Gastrocnemius medialis (tissue), 4 donors: ENCODE measurements at regions of chr18 and their contacts with region 1.

Region 1: DNA sequence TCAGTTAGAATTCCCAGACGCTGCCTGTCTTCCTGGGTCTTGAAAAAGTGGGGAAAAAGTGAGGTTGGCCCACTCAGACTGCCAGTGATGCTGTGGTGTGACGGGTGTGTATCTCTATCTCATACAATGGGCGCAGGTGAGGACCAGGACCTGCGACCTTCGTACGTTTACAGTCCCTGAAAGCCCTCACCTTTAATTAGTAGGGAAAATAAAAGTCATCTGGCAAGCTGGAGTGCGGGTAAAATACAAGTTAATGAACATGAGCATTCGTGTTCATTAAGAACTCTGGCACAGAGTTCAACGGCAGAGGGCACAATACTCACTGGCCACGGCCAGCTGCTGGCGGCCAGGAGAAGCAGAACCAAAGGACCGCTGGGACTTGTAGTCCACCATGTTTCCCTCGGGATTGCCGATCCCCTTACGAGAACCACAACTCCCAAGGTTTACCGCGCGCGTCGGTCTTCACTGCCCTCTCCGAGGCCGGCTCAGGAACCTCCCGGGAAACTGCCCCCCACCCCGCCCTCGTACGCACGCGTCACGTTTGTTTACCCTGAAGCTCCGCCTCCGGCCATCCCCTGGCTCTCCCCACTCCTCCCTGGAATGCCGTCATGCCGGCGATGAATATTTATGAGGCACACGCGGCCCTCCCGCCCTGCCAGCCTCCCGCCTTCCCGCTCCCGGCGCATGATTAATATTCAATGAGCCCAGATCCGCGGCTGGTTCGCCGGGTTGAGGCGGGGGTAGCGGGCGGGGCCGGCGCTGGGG is 488 bp upstream of the PHLPP1 start:
- DNase-seq: peak; percentile 99
- ATAC-seq: peak; percentile 91 to 92
- H3K4me3 ChIP-seq: peak overlapping the region; percentile 68 to 78 (median 70)
- H3K27ac ChIP-seq: peak overlapping the region; percentile 92 to 95 (median 94)
- H3K4me1 ChIP-seq: peaks cover 19 to 32% of the 10 kb centered on the region in 2 donors
- H3K27me3 ChIP-seq: no peaks in the 10 kb centered on the region
- CTCF ChIP-seq: peak; percentile 58 to 82 (median 68)
- POLR2A ChIP-seq: no peak

Region 2: DNA sequence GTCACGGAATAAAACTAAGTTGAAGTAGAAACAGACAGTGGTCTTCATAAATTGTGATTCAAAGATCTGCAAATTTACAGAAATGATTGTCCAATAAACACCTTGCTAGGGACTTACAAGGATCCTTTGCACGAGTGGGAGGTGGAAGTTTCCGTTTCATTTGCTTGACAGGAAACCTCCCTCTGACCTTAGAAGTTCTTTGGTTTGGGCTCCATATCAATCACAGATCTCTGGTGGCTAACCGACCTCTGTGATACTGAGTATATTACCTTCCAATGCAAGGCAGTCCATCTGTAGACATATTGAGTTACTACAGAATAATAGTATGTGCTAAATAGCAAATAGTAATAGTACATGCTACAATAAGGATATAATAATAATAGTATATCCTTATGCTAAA is 788.3 kb before region 1 on chr18:
- in situ Hi-C with region 1: no loop called
- intact Hi-C with region 1: no loop called
- DNase-seq: no peak
- ATAC-seq: no peak
- H3K4me3 ChIP-seq: no peak overlapping the region
- H3K27ac ChIP-seq: no peak overlapping the region
- H3K4me1 ChIP-seq: no peaks in the 10 kb centered on the region
- H3K27me3 ChIP-seq: no peaks in the 10 kb centered on the region
- CTCF ChIP-seq: no peak
- POLR2A ChIP-seq: no peak

Region 3: GRCh38 chr18:62324917-62325805 is 389.7 kb before region 1 on chr18 and contains the start of gene TNFRSF11A:
- in situ Hi-C with region 1: no loop called
- intact Hi-C with region 1: loop called (anchors 5 kb)
- DNase-seq: no peak
- ATAC-seq: peak; percentile 38 to 64
- H3K4me3 ChIP-seq: peak within 1 kb of the TSS; percentile 52 to 58 (median 54)
- H3K27ac ChIP-seq: no peak within 1 kb of the TSS
- H3K4me1 ChIP-seq: peaks cover 15 to 24% of the 10 kb centered on the region in 2 donors
- H3K27me3 ChIP-seq: peaks cover 63 to 80% (median 69%) of the 10 kb centered on the region in 3 donors
- CTCF ChIP-seq: peak in 4 of 5 experiments; percentile 20 to 30 (median 24)
- POLR2A ChIP-seq: no peak
- total RNA-seq, gene TNFRSF11A: 1.4 to 3.2 (median 1.8) TPM in 3 of 4 donors, not detected in the other

Region 4: DNA sequence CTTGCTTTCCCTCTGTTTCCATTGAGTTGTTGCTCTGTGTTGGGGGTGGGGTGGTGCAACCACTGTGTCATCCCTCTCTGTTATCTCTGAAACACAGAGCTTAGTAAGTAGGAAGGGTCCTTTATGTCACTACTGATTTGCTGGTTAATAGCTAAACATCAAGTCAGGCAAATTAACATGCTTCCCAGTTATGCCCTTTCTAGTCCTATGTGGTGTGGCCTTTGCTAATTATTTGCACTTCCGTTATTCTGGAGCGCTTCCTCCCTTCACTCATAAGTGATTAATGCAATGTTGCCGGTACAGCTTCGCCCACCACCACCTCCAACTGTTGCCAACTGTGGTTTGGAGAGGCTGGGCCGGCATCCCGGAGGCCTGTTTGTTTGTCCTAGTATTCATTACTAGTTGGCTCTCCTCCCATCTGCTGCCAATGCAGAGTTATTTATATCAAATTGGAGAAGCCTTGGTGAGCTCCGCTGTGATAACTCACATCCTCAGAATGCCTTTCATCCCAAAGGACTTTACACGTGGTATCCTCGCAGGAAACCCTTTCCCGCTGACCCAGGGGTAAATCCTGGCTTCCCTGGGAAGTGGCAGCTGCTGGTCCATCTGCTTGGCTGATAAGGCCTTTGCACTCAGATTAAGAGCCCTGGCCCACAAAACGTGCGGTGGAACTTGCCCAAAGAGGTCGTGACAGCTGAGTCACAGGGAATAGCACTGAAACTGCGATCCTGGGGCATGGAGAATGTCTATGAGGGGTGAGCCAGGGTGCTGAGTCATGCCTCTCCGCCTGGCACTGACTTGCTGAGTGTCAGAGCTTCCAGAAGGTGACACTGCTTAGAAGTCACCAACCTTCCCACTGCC is 264.1 kb before region 1 on chr18:
- in situ Hi-C with region 1: no loop called
- intact Hi-C with region 1: loop called (anchors 2 kb)
- DNase-seq: peak; percentile 88 to 94
- ATAC-seq: peak; percentile 84 to 87
- H3K4me3 ChIP-seq: peak overlapping the region in 3 of 4 donors; percentile 4 to 34 (median 16)
- H3K27ac ChIP-seq: peak overlapping the region; percentile 81 to 94 (median 91)
- H3K4me1 ChIP-seq: peaks cover 22 to 23% of the 10 kb centered on the region in 2 donors
- H3K27me3 ChIP-seq: no peaks in the 10 kb centered on the region
- CTCF ChIP-seq: no peak
- POLR2A ChIP-seq: no peak

Region 5: DNA sequence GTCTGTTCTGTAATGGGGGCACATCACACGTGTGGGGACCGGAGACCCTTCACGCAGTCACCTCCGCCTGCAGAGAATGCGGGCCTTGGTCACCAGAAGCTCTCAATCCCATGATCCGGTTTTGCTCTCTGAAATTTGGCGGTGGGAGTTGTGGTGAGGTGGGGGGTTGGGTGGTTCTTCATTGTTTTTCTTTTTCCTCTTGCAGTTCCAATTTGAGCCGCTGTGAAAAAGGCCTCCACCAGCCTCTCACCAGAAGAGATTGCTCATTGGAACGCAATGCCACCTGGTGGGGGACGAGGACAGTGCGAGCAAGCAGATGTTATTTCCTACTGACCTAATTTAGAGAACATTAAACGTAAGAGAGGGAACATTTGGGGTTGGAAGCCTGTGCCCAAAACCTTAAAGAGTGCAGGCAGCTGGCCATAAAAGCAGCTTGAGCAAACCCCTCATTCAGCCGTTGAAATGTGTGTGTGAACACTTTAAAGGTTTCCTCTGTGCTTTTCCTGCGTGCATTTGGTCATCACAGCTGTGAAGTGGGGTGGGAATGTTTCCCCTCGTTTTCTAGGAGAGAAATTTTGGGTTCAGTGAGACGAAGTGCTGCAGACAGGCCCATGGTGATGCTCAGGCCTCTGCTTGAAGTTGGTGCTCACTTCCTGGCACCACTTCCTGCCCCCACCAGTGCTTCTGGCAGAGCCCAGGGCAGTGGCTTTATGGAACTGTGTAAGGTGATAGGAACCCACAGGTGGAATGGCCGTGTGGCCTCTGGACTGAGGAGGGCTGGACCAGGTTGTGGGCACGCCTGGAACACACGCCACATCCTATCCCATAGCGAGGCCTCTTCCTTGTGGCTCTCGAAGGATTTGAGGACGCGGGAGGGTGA is 130.4 kb before region 1 on chr18:
- in situ Hi-C with region 1: no loop called
- intact Hi-C with region 1: loop called (anchors 2 kb)
- DNase-seq: peak; percentile 78 to 83
- ATAC-seq: peak; percentile 90 to 95
- H3K4me3 ChIP-seq: peak overlapping the region in 2 of 4 donors; percentile 30 to 35
- H3K27ac ChIP-seq: peak overlapping the region; percentile 63 to 70 (median 64)
- H3K4me1 ChIP-seq: peaks cover 11 to 13% of the 10 kb centered on the region in 2 donors
- H3K27me3 ChIP-seq: no peaks in the 10 kb centered on the region
- CTCF ChIP-seq: peak; percentile 95 to 99 (median 97)
- POLR2A ChIP-seq: no peak

Region 6: GRCh38 chr18:62982600-62983251 is 267.9 kb after region 1 on chr18:
- in situ Hi-C with region 1: loop called in 3 of 4 experiments (anchors 10 to 25 kb)
- intact Hi-C with region 1: loop called (anchors 1 kb)
- DNase-seq: peak; percentile 24 to 25
- ATAC-seq: peak; percentile 77 to 86
- H3K4me3 ChIP-seq: peak overlapping the region in 3 of 4 donors; percentile 15 to 39 (median 34)
- H3K27ac ChIP-seq: no peak overlapping the region
- H3K4me1 ChIP-seq: no peaks in the 10 kb centered on the region
- H3K27me3 ChIP-seq: no peaks in the 10 kb centered on the region
- CTCF ChIP-seq: peak; percentile 62 to 78 (median 74)
- POLR2A ChIP-seq: no peak

Region 7: GRCh38 chr18:63367053-63367953 is 652.5 kb after region 1 on chr18 and contains the start of gene KDSR:
- in situ Hi-C with region 1: no loop called
- intact Hi-C with region 1: loop called (anchors 1 kb)
- DNase-seq: peak; percentile 85 to 90
- ATAC-seq: peak; percentile 88 to 89
- H3K4me3 ChIP-seq: peak within 1 kb of the TSS; percentile 81 to 95 (median 90)
- H3K27ac ChIP-seq: peak within 1 kb of the TSS; percentile 90 to 99 (median 97)
- H3K4me1 ChIP-seq: peaks cover 19 to 21% of the 10 kb centered on the region in 2 donors
- H3K27me3 ChIP-seq: no peaks in the 10 kb centered on the region
- CTCF ChIP-seq: peak in 2 of 5 experiments; percentile 12 to 26
- POLR2A ChIP-seq: peak; percentile 80 to 87
- total RNA-seq, gene KDSR: 11.2 to 18.6 (median 14.4) TPM

Region 8: DNA sequence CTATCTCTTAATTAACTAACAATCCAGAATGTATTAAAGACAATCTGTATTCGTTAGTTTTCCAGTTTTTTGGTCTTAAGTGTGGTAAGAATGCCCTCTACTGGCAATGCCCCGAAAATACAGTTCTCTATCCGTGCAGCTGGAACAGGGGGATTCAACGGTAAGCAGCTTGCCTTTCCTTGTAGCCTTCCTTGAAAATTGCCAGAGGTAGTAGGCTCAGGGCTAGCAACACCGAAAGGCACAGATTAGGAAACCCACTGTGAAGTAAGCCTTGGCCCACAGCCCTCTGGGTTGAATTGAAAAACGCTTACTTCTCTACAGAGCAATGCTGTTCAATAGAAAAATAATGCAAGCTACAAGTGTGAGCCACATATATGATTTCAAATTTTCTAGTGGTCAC is 724.5 kb after region 1 on chr18:
- in situ Hi-C with region 1: loop called in 2 of 4 experiments (anchors 25 kb)
- intact Hi-C with region 1: no loop called
- DNase-seq: peak; percentile 10 to 33
- ATAC-seq: peak; percentile 68 to 80
- H3K4me3 ChIP-seq: no peak overlapping the region
- H3K27ac ChIP-seq: no peak overlapping the region
- H3K4me1 ChIP-seq: peaks cover 3 to 5% of the 10 kb centered on the region in 2 donors
- H3K27me3 ChIP-seq: no peaks in the 10 kb centered on the region
- CTCF ChIP-seq: peak; percentile 64 to 77 (median 67)
- POLR2A ChIP-seq: no peak